ENCODE measurements at regions of chr7 and their contacts with region 1.

Region 1: GRCh38 chr7:96321658-96322372 is at the start of gene SLC25A13:
- DNase-seq: peak; percentile 86
- ATAC-seq: peak; percentile 96
- H3K4me3 ChIP-seq: peak within 1 kb of the TSS; percentile 76 to 93 (median 91)
- H3K27ac ChIP-seq: peak within 1 kb of the TSS; percentile 98
- H3K4me1 ChIP-seq: peaks cover 51% of the 10 kb centered on the region
- H3K27me3 ChIP-seq: no peaks in the 10 kb centered on the region
- CTCF ChIP-seq: peak; percentile 51
- EP300 ChIP-seq: peak; percentile 55 to 58; a peak in 3 of 4 replicates
- POLR2A ChIP-seq: peak; percentile 31 to 56; a peak in 2 of 4 replicates
- RAD21 ChIP-seq: peak; percentile 9
- total RNA-seq, gene SLC25A13: 84.9 and 112 TPM in 2 replicates

Region 2: DNA sequence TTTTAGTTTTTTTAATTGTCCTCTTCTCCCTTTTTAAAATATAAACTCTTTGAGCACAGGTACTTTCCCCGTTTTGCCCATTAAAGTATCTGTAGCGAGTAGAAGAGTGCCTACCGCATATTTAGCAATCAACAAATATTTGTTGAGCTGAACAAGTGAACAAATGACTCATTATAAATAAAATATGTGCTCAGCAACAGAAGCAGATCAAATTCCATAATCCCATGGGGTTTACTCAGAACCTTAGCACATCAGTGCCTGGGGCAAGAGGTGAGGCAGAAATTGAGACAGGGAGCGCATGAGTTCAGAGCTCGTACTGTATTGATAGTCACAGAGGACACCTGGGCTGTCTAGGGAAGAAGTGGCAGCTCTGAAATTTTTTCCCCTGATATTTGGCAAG is 226.8 kb after region 1 on chr7:
- CTCF ChIA-PET with region 1: no interaction called
- POLR2A ChIA-PET with region 1: no interaction called
- in situ Hi-C with region 1: no loop called
- intact Hi-C with region 1: loop called (anchors 10 kb)
- DNase-seq: peak; percentile 76
- ATAC-seq: peak; percentile 99
- H3K4me3 ChIP-seq: no peak overlapping the region
- H3K27ac ChIP-seq: no peak overlapping the region
- H3K4me1 ChIP-seq: peaks cover 26% of the 10 kb centered on the region
- H3K27me3 ChIP-seq: no peaks in the 10 kb centered on the region
- CTCF ChIP-seq: no peak
- EP300 ChIP-seq: peak in 1 of 2 experiments; percentile 54; a peak in 1 of 4 replicates
- POLR2A ChIP-seq: no peak
- RAD21 ChIP-seq: no peak

Region 3: GRCh38 chr7:97872025-97872669 is 1550.3 kb after region 1 on chr7 and contains the start of gene ASNS:
- CTCF ChIA-PET with region 1: no interaction called
- POLR2A ChIA-PET with region 1: no interaction called
- in situ Hi-C with region 1: no loop called
- intact Hi-C with region 1: loop called (anchors 5 kb)
- DNase-seq: peak; percentile 77
- ATAC-seq: peak; percentile 99
- H3K4me3 ChIP-seq: peak within 1 kb of the TSS; percentile 80 to 97 (median 85)
- H3K27ac ChIP-seq: peak within 1 kb of the TSS; percentile 64
- H3K4me1 ChIP-seq: peaks cover 37% of the 10 kb centered on the region
- H3K27me3 ChIP-seq: no peaks in the 10 kb centered on the region; a peak in 1 of 5 replicates
- CTCF ChIP-seq: 0 out of 2 replicates have a peak, but pooled peaks have one; percentile 22
- EP300 ChIP-seq: peak in 1 of 2 experiments; percentile 38; a peak in 1 of 4 replicates
- POLR2A ChIP-seq: peak; percentile 74 to 93
- RAD21 ChIP-seq: no peak
- total RNA-seq, gene ASNS: 55.0 and 81.9 TPM in 2 replicates